ENCODE measurements at regions of chr3 and their contacts with region 1.

Region 1: GRCh38 chr3:192423003-192423349 is 304.4 kb downstream of the FGF12 start:
- DNase-seq: no peak
- H3K4me3 Mint-ChIP-seq: no peak overlapping the region
- H3K27ac Mint-ChIP-seq: peak overlapping the region; percentile 50
- H3K4me1 Mint-ChIP-seq: peaks cover 22% of the 10 kb centered on the region
- H3K27me3 Mint-ChIP-seq: no peaks in the 10 kb centered on the region
- CTCF ChIP-seq: peak; percentile 50

Region 2: GRCh38 chr3:192188218-192188835 is 234.6 kb before region 1 on chr3:
- CTCF ChIA-PET with region 1: interaction called, 5 read pairs
- intact Hi-C with region 1: loop called (anchors 1 kb)
- DNase-seq: peak; percentile 84
- H3K4me3 Mint-ChIP-seq: no peak overlapping the region
- H3K27ac Mint-ChIP-seq: no peak overlapping the region
- H3K4me1 Mint-ChIP-seq: peaks cover 15% of the 10 kb centered on the region
- H3K27me3 Mint-ChIP-seq: no peaks in the 10 kb centered on the region
- CTCF ChIP-seq: peak; percentile 94

Region 3: GRCh38 chr3:192212979-192213378 is 210.0 kb before region 1 on chr3:
- CTCF ChIA-PET with region 1: no interaction called
- intact Hi-C with region 1: no loop called
- DNase-seq: no peak
- H3K4me3 Mint-ChIP-seq: no peak overlapping the region
- H3K27ac Mint-ChIP-seq: no peak overlapping the region
- H3K4me1 Mint-ChIP-seq: no peaks in the 10 kb centered on the region
- H3K27me3 Mint-ChIP-seq: no peaks in the 10 kb centered on the region
- CTCF ChIP-seq: no peak

Region 4: GRCh38 chr3:192409357-192409824 is 13.6 kb before region 1 on chr3:
- CTCF ChIA-PET with region 1: interaction called, 24 read pairs
- intact Hi-C with region 1: no loop called
- DNase-seq: peak; percentile 60
- H3K4me3 Mint-ChIP-seq: peak overlapping the region; percentile 80
- H3K27ac Mint-ChIP-seq: no peak overlapping the region
- H3K4me1 Mint-ChIP-seq: peaks cover 21% of the 10 kb centered on the region
- H3K27me3 Mint-ChIP-seq: no peaks in the 10 kb centered on the region
- CTCF ChIP-seq: no peak

Region 5: GRCh38 chr3:192433704-192434103 is 10.7 kb after region 1 on chr3:
- CTCF ChIA-PET with region 1: interaction called, 13 read pairs
- intact Hi-C with region 1: no loop called
- DNase-seq: peak; percentile 75
- H3K4me3 Mint-ChIP-seq: peak overlapping the region; percentile 31
- H3K27ac Mint-ChIP-seq: peak overlapping the region; percentile 66
- H3K4me1 Mint-ChIP-seq: peaks cover 12% of the 10 kb centered on the region
- H3K27me3 Mint-ChIP-seq: no peaks in the 10 kb centered on the region
- CTCF ChIP-seq: no peak

Measured in Calu3 (cell line).